ENCODE measurements at regions of chr2 and their contacts with region 1.

Region 1: DNA sequence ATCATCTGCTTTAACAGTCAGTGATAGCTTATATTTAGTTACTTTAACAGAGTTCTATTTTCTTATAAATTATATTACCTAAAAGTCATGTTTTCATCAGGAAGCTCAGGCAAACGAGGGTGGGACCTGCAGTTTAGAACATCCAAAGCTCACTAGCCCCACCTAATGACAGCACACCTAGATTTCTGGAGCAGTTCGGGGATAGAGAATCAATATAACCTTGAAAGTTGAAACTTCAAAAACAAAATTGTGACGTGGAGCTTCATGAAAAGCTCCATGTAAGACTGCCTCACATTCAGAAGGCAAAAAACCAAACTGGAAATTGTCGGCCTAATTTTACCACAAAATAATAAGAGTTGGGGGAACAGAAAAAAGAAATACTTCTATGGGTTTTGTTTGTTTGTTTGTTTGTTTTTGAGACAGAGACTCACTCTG is 185.9 kb upstream of the CCDC150 start:
- DNase-seq: peak; percentile 63
- H3K4me3 Mint-ChIP-seq: no peak overlapping the region
- H3K27ac Mint-ChIP-seq: no peak overlapping the region
- H3K4me1 Mint-ChIP-seq: peaks cover 2% of the 10 kb centered on the region
- H3K27me3 Mint-ChIP-seq: peaks cover 16% of the 10 kb centered on the region

Region 2: DNA sequence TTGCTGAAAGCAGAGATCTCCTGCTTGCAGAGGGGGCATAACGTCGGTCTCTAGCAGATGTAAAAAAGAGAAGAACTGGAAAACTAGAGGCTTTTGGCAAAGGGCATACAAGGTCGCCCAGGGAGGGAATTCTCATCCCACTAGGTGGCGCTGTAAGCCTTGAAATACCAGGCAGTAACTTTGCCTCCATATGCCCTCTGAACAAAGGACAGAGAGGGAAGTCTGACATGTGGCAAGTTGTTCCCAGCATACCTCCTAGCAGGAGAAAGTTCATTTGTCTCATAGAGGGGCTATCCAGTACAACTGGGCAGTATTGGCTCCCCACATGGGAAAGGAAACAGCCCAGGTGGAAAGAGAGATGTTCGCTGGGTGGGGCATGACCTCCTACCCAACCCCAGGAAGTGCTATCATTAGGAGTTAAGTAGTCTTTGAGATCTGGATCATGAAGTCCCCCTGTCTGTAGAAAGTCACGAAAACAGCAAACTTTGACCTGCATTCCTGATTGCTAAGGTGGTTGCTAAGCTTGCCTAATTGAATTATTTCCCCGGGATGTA is 322.2 kb before region 1 on chr2:
- CTCF ChIA-PET with region 1: interaction called, 6 read pairs
- intact Hi-C with region 1: loop called (anchors 1 kb)
- DNase-seq: peak; percentile 70
- H3K4me3 Mint-ChIP-seq: no peak overlapping the region
- H3K27ac Mint-ChIP-seq: peak overlapping the region; percentile 70
- H3K4me1 Mint-ChIP-seq: peaks cover 12% of the 10 kb centered on the region
- H3K27me3 Mint-ChIP-seq: no peaks in the 10 kb centered on the region

Region 3: GRCh38 chr2:196337208-196337953 is 116.2 kb before region 1 on chr2:
- CTCF ChIA-PET with region 1: interaction called, 21 read pairs
- intact Hi-C with region 1: loop called (anchors 1 kb)
- DNase-seq: peak; percentile 37
- H3K4me3 Mint-ChIP-seq: no peak overlapping the region
- H3K27ac Mint-ChIP-seq: no peak overlapping the region
- H3K4me1 Mint-ChIP-seq: peaks cover 8% of the 10 kb centered on the region
- H3K27me3 Mint-ChIP-seq: no peaks in the 10 kb centered on the region

Region 4: DNA sequence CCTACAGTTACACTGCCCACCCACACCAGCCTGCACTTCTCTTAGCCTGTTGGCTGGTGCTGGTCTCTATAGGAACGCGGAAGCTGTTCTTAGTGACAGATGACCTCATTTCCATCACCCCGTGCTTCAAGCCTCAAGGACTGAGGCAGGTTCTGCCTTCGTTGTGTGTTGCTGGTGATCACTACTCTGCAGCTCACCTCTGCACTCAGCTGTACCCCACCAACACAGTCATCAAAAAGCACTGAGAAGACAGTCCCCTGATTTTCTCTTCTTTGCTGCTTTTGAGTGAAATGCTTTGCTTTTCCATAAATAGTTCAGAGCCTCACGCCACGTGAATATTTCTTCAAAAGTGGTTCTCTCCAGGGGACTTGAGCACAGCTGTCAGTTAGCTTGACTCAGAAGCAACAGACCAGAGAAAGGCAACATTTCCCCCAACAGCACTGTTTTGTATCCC is 39.8 kb before region 1 on chr2:
- CTCF ChIA-PET with region 1: interaction called, 12 read pairs
- intact Hi-C with region 1: no loop called
- DNase-seq: no peak
- H3K4me3 Mint-ChIP-seq: no peak overlapping the region
- H3K27ac Mint-ChIP-seq: no peak overlapping the region
- H3K4me1 Mint-ChIP-seq: peaks cover 10% of the 10 kb centered on the region
- H3K27me3 Mint-ChIP-seq: no peaks in the 10 kb centered on the region

Region 5: DNA sequence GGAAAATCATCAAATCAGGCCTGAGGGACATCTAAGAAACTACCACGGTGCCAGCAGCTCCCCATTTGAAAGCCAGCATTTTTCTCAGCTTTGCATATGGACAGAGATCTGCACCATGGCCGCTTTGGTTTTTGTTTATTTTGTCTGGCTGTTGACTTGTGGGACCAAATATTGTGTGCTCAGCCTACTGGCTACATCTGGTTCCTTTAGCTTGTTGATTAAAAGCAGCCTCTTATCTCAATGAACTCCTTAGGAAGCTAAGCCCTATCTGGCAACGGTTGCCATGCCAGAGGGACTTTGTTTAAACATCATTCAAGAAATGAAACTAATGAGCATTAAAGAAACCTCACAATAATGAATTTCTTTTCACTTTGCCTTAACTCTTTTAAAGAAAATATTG is 153.4 kb after region 1 on chr2:
- CTCF ChIA-PET with region 1: no interaction called
- intact Hi-C with region 1: no loop called
- DNase-seq: no peak
- H3K4me3 Mint-ChIP-seq: no peak overlapping the region
- H3K27ac Mint-ChIP-seq: no peak overlapping the region
- H3K4me1 Mint-ChIP-seq: no peaks in the 10 kb centered on the region
- H3K27me3 Mint-ChIP-seq: peaks cover 5% of the 10 kb centered on the region

Measured in activated naive CD4-positive, alpha-beta T cell treated with anti-CD3 and anti-CD28 coated beads for 36 hours (primary cell).